Mammary epithelial cell (primary cell): ENCODE measurements at regions of chr3 and their contacts with region 1.

Region 1: DNA sequence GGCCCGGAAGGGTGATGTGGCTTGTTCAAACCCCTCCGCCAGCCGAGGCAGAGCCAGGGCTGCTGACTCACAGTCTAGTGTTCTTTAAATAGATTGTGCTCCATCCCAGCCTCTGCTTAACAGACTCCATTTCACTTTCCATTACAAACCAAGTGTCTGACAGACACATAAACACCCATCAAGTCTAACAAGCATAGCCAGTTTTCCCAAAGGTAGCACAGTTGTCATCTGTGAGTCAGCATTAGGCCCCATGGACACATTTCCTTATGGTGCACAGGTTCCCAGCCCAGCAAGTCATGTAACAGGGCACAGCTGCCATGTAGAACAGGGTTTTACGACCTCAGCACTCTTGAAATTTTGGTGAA is 109.9 kb upstream of the RAP2B start:
- DNase-seq: peak; percentile 98
- H3K4me3 ChIP-seq: no peak overlapping the region
- H3K27ac ChIP-seq: peak overlapping the region; percentile 96
- H3K4me1 ChIP-seq: peaks cover 21% of the 10 kb centered on the region
- H3K27me3 ChIP-seq: no peaks in the 10 kb centered on the region
- CTCF ChIP-seq: no peak

Region 2: DNA sequence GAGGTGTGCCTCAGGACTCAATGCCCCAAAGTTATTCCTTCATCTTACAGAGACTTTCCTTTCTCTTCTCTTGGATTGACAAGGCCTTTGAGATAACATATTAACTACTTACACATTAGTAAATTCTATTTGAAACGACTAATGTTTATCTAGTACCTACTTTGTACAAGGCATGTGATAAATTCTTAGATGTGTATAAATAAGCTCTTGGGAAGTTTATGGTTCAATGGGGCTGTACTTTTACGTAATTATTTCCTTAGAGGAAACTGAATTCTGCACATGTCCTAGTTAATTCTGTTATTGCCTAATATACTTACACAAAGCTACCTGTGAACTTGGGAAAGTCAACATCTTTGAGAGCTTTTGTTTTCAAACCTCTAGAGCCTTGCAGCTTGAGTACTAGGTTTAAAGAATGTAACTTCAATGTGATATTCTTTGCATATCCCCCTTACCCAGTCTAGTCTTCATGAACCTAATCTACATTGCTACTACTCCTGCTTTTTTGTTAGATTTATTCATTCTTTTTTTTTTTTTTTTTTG is 51.4 kb after region 1 on chr3:
- CTCF ChIA-PET with region 1: no interaction called
- dilution Hi-C with region 1: no loop called
- in situ Hi-C with region 1: no loop called
- intact Hi-C with region 1: no loop called
- DNase-seq: no peak
- H3K4me3 ChIP-seq: no peak overlapping the region
- H3K27ac ChIP-seq: no peak overlapping the region
- H3K4me1 ChIP-seq: no peaks in the 10 kb centered on the region
- H3K27me3 ChIP-seq: no peaks in the 10 kb centered on the region
- CTCF ChIP-seq: no peak

Region 3: GRCh38 chr3:153138276-153139210 is 86.5 kb after region 1 on chr3:
- CTCF ChIA-PET with region 1: no interaction called
- dilution Hi-C with region 1: loop called (anchors 5 kb)
- in situ Hi-C with region 1: no loop called
- intact Hi-C with region 1: loop called (anchors 1 kb)
- DNase-seq: peak; percentile 100
- H3K4me3 ChIP-seq: no peak overlapping the region
- H3K27ac ChIP-seq: peak overlapping the region; percentile 100
- H3K4me1 ChIP-seq: peaks cover 43% of the 10 kb centered on the region
- H3K27me3 ChIP-seq: no peaks in the 10 kb centered on the region
- CTCF ChIP-seq: no peak